A673 (cell line): ENCODE measurements at regions of chr18 and their contacts with region 1.

Region 1: DNA sequence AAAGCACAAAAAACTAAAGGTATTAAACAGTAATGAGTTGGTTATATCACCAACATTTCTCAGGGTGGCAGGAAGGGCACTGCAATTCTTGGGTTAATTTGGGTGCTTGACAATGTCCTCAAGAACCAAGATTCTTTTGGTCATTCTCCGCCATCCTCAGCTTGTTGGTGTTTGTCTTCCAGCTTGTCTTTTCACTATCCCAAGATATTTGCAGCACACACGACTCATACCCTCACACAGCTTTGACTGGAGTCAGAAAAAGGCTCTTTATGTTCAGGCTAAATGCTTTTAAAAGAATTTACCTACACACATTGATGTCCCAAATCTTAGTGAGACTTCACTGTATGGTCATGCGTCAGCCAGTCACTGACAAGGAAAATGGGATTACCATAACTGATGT is 12.5 kb downstream of the GREB1L start:
- DNase-seq: no peak
- H3K4me3 ChIP-seq: no peak overlapping the region
- H3K27ac ChIP-seq: no peak overlapping the region
- H3K4me1 ChIP-seq: no peaks in the 10 kb centered on the region
- H3K27me3 ChIP-seq: peaks cover 9% of the 10 kb centered on the region
- CTCF ChIP-seq: no peak

Region 2: DNA sequence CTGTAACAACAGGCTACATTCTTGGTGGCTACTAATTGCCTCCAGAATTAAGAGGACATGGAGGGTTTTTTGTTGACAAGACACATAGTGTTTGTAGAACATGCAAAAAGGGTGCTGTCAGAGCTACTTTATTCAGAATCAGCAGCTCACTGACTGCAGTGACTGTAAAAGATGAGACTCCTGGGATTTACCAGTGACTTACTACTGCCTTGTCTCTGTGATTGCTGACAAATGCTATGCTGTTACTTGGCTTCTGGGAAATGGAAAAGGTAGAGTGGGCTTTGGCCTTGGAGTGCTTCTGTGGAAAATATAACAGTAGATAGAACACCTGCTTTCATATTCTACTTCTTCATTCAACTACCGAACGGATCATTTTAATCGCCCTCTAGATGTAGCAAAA is 35.3 kb after region 1 on chr18:
- CTCF ChIA-PET with region 1: no interaction called
- POLR2A ChIA-PET with region 1: no interaction called
- intact Hi-C with region 1: loop called (anchors 5 kb)
- DNase-seq: no peak
- H3K4me3 ChIP-seq: no peak overlapping the region
- H3K27ac ChIP-seq: no peak overlapping the region
- H3K4me1 ChIP-seq: no peaks in the 10 kb centered on the region
- H3K27me3 ChIP-seq: peaks cover 8% of the 10 kb centered on the region
- CTCF ChIP-seq: no peak